Posterior vena cava (tissue), 2 donors: ENCODE measurements at regions of chr7 and their contacts with region 1.

Region 1: GRCh38 chr7:158479021-158479663 is 108.5 kb downstream of the PTPRN2 start:
- DNase-seq: peak; percentile 53

Region 2: GRCh38 chr7:158685693-158686092 is 206.6 kb after region 1 on chr7:
- intact Hi-C with region 1: no loop called
- DNase-seq: no peak

Region 3: DNA sequence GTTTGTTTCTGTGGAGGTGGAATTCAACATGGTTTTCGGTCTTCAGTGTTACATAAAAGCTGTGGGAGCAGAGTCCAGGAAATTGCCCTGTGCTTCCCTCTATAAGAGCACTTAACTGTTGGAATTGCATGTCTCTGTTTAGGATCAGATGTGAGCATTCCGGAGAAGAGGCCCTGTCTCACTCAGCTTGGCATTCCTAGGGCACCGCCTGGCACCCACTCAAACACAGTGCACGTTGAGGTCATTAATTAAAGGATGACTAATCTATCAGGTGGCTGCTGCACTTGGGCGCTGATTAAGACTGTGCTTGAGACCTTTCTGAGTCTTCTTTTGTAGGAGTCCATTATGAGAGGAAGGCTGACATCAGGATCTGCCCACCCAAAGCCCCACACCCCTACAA is 748.3 kb after region 1 on chr7:
- intact Hi-C with region 1: loop called in 1 of 2 experiments (anchors 5 kb)
- DNase-seq: no peak